CD4-positive, alpha-beta memory T cell (primary cell): ENCODE measurements at regions of chr15 and their contacts with region 1.

Region 1: GRCh38 chr15:80776420-80777045 is 2.6 kb upstream of the CEMIP start:
- DNase-seq: peak; percentile 39 to 58 (median 44)
- H3K4me3 ChIP-seq: no peak overlapping the region
- H3K4me3 Mint-ChIP-seq: no peak overlapping the region
- H3K27ac ChIP-seq: no peak overlapping the region
- H3K27ac Mint-ChIP-seq: no peak overlapping the region
- H3K4me1 ChIP-seq: peaks cover 5% of the 10 kb centered on the region
- H3K4me1 Mint-ChIP-seq: peaks cover 3 to 10% (median 5%) of the 10 kb centered on the region in 4 donors
- H3K27me3 ChIP-seq: peaks cover 22% of the 10 kb centered on the region
- H3K27me3 Mint-ChIP-seq: peaks cover 9 to 28% of the 10 kb centered on the region in 2 donors

Region 2: DNA sequence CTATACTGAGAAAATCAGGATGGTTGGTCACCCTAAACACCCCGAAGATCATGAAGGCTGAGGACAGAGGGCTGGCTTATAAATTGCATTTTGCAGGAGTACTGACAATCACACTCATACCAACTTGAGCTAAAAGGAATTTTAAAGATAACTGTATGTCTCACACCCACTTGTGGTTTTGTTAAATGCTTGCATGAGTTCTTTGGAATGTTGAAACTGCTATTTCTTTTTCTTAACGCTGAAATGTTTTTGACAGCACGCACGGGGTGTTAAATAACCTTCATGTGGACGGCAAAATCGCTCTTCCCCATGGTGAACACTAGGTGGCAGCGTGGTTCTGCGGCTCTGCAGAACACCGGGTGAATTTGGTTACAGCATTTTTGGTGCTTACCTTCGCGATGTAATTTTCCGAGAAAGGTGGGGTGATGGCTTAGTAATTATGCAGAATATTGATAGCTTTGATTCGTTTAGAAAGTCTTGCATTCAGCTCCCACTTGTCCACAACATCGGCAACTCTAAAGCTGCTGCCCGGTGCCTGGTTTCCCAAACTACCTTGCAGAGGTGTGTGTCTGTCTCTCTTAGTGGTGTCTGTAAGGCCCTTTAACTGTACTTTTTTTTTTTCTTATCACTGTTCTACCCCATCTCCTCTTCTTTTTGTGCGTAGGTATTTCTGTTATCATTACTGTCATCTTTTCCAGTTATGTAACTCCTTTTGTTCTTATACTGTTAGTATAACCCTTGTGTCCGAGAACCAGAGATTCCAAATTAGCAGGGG is 320.7 kb before region 1 on chr15:
- CTCF ChIA-PET with region 1: interaction called, 138 read pairs
- POLR2A ChIA-PET with region 1: no interaction called
- intact Hi-C with region 1: no loop called
- DNase-seq: peak in 4 of 5 donors; percentile 52 to 55 (median 54)
- H3K4me3 ChIP-seq: no peak overlapping the region
- H3K4me3 Mint-ChIP-seq: peak overlapping the region in 1 of 8 donors; percentile 25
- H3K27ac ChIP-seq: no peak overlapping the region
- H3K27ac Mint-ChIP-seq: no peak overlapping the region
- H3K4me1 ChIP-seq: no peaks in the 10 kb centered on the region
- H3K4me1 Mint-ChIP-seq: peaks cover 0 to 6% (median 1%) of the 10 kb centered on the region in 4 donors
- H3K27me3 ChIP-seq: peaks cover 3% of the 10 kb centered on the region
- H3K27me3 Mint-ChIP-seq: peaks cover 8 to 17% of the 10 kb centered on the region in 2 donors

Region 3: GRCh38 chr15:80567721-80568157 is 208.8 kb before region 1 on chr15:
- CTCF ChIA-PET with region 1: interaction called, 20 read pairs
- POLR2A ChIA-PET with region 1: no interaction called
- intact Hi-C with region 1: loop called (anchors 1 kb)
- DNase-seq: peak in 4 of 5 donors; percentile 3 to 20 (median 10)
- H3K4me3 ChIP-seq: no peak overlapping the region
- H3K4me3 Mint-ChIP-seq: no peak overlapping the region
- H3K27ac ChIP-seq: no peak overlapping the region
- H3K27ac Mint-ChIP-seq: no peak overlapping the region
- H3K4me1 ChIP-seq: no peaks in the 10 kb centered on the region
- H3K4me1 Mint-ChIP-seq: no peaks in the 10 kb centered on the region
- H3K27me3 ChIP-seq: no peaks in the 10 kb centered on the region
- H3K27me3 Mint-ChIP-seq: peaks cover 15 to 30% of the 10 kb centered on the region in 2 donors

Region 4: GRCh38 chr15:80835338-80835737 is 58.8 kb after region 1 on chr15:
- CTCF ChIA-PET with region 1: no interaction called
- POLR2A ChIA-PET with region 1: no interaction called
- intact Hi-C with region 1: loop called (anchors 10 kb)
- DNase-seq: no peak
- H3K4me3 ChIP-seq: no peak overlapping the region
- H3K4me3 Mint-ChIP-seq: no peak overlapping the region
- H3K27ac ChIP-seq: no peak overlapping the region
- H3K27ac Mint-ChIP-seq: no peak overlapping the region
- H3K4me1 ChIP-seq: no peaks in the 10 kb centered on the region
- H3K4me1 Mint-ChIP-seq: no peaks in the 10 kb centered on the region
- H3K27me3 ChIP-seq: no peaks in the 10 kb centered on the region
- H3K27me3 Mint-ChIP-seq: peaks cover 6 to 9% of the 10 kb centered on the region in 2 donors

Region 5: GRCh38 chr15:80875568-80876347 is 99.2 kb after region 1 on chr15:
- CTCF ChIA-PET with region 1: no interaction called
- POLR2A ChIA-PET with region 1: no interaction called
- intact Hi-C with region 1: no loop called
- DNase-seq: no peak
- H3K4me3 ChIP-seq: no peak overlapping the region
- H3K4me3 Mint-ChIP-seq: no peak overlapping the region
- H3K27ac ChIP-seq: no peak overlapping the region
- H3K27ac Mint-ChIP-seq: no peak overlapping the region
- H3K4me1 ChIP-seq: no peaks in the 10 kb centered on the region
- H3K4me1 Mint-ChIP-seq: no peaks in the 10 kb centered on the region
- H3K27me3 ChIP-seq: no peaks in the 10 kb centered on the region
- H3K27me3 Mint-ChIP-seq: peaks cover 8 to 10% of the 10 kb centered on the region in 2 donors